ENCODE measurements at regions of chr2 and their contacts with region 1.

Region 1: GRCh38 chr2:55338268-55338667 is 69.2 kb upstream of the MTIF2 start:
- H3K4me3 Mint-ChIP-seq: no peak overlapping the region
- H3K27ac Mint-ChIP-seq: no peak overlapping the region
- H3K4me1 Mint-ChIP-seq: no peaks in the 10 kb centered on the region
- H3K27me3 Mint-ChIP-seq: no peaks in the 10 kb centered on the region

Region 2: DNA sequence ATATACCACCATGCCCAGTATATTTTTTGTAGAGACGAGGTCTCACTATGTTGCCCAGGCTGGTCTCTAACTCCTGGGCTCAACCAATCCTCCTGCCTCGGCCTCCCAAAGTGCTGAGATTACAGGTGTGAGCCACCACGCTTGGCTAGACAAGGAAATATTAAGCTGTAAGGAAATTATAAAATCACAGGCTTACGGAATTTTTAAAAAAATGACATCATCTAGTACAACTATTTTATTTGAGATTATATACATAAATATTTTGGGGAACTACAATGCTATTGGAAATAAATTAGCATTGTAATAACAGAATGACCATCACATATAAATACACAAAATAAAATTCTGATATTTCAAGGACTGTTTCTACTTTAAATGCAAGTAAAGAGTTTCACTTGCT is 237.3 kb after region 1 on chr2:
- intact Hi-C with region 1: loop called (anchors 10 kb)
- H3K4me3 Mint-ChIP-seq: no peak overlapping the region
- H3K27ac Mint-ChIP-seq: no peak overlapping the region
- H3K4me1 Mint-ChIP-seq: no peaks in the 10 kb centered on the region
- H3K27me3 Mint-ChIP-seq: no peaks in the 10 kb centered on the region